CD4-positive, alpha-beta T cell (primary cell): ENCODE measurements at regions of chr20 and their contacts with region 1.

Region 1: GRCh38 chr20:21323640-21324039 is 20.5 kb downstream of the XRN2 start:
- DNase-seq: no peak
- ATAC-seq: no peak
- H3K4me3 ChIP-seq: no peak overlapping the region
- H3K4me3 Mint-ChIP-seq: peak overlapping the region; percentile 5
- H3K27ac ChIP-seq: no peak overlapping the region
- H3K27ac Mint-ChIP-seq: peak overlapping the region; percentile 23
- H3K4me1 ChIP-seq: peaks cover 17% of the 10 kb centered on the region
- H3K4me1 Mint-ChIP-seq: peaks cover 74% of the 10 kb centered on the region
- H3K27me3 ChIP-seq: no peaks in the 10 kb centered on the region
- H3K27me3 Mint-ChIP-seq: no peaks in the 10 kb centered on the region
- CTCF ChIP-seq: no peak

Region 2: DNA sequence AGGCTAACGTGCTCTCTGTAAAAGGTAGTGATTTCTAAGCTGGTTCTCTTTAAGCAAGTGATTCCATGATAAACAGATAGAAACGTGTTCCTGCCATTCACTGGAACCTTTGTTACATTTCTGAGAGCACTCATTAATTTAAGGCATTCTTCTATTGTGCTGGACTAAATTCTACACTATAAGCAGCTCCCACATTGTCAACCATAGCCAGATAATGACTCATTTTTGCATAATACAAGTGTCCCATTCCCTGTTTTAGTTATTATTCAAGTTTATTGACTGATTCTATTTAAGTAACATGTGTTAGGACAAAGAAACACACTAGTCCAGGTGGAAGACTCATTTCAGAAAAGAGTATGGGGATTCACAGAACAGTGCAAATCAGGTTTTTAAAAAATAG is 34.0 kb before region 1 on chr20:
- CTCF ChIA-PET with region 1: no interaction called
- POLR2A ChIA-PET with region 1: no interaction called
- intact Hi-C with region 1: no loop called
- DNase-seq: no peak
- ATAC-seq: no peak
- H3K4me3 ChIP-seq: no peak overlapping the region
- H3K4me3 Mint-ChIP-seq: no peak overlapping the region
- H3K27ac ChIP-seq: no peak overlapping the region
- H3K27ac Mint-ChIP-seq: no peak overlapping the region
- H3K4me1 ChIP-seq: no peaks in the 10 kb centered on the region
- H3K4me1 Mint-ChIP-seq: no peaks in the 10 kb centered on the region
- H3K27me3 ChIP-seq: peaks cover 9 to 22% of the 10 kb centered on the region in 2 experiments
- H3K27me3 Mint-ChIP-seq: peaks cover 60% of the 10 kb centered on the region
- CTCF ChIP-seq: no peak

Region 3: GRCh38 chr20:21361266-21361665 is 37.6 kb after region 1 on chr20:
- CTCF ChIA-PET with region 1: interaction called, 3 read pairs
- POLR2A ChIA-PET with region 1: no interaction called
- intact Hi-C with region 1: loop called in 1 of 2 experiments (anchors 5 kb)
- DNase-seq: no peak
- ATAC-seq: no peak
- H3K4me3 ChIP-seq: no peak overlapping the region
- H3K4me3 Mint-ChIP-seq: no peak overlapping the region
- H3K27ac ChIP-seq: no peak overlapping the region
- H3K27ac Mint-ChIP-seq: no peak overlapping the region
- H3K4me1 ChIP-seq: no peaks in the 10 kb centered on the region
- H3K4me1 Mint-ChIP-seq: no peaks in the 10 kb centered on the region
- H3K27me3 ChIP-seq: no peaks in the 10 kb centered on the region
- H3K27me3 Mint-ChIP-seq: no peaks in the 10 kb centered on the region
- CTCF ChIP-seq: no peak